ENCODE measurements at regions of chrX and their contacts with region 1.

Region 1: DNA sequence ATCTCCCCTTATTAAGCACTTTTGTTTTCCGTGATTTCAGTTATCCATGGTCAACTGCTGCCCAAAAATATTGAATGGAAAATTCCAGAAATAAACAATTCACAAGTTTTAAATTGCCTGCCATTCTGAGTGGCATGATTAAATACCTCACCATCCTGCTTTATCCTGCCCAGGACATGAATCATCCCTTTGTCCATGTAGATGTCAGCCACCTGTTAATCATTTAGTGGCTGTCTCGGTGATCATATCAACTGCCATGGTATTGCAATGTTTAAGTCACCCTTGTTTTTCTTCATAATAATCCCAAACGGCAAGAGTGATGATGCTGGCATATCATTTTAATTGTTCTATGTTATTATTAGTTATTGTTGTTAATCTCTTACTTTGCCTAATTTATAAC is 79.8 kb upstream of the LHFPL1 start:
- DNase-seq: no peak
- ATAC-seq: peak in 3 of 4 donors; percentile 67 to 83 (median 80)
- H3K4me3 ChIP-seq: no peak overlapping the region
- H3K27ac ChIP-seq: no peak overlapping the region
- H3K4me1 ChIP-seq: peaks cover 7% of the 10 kb centered on the region
- H3K27me3 ChIP-seq: no peaks in the 10 kb centered on the region
- CTCF ChIP-seq: no peak

Region 2: GRCh38 chrX:112941209-112941788 is 181.8 kb after region 1 on chrX:
- intact Hi-C with region 1: loop called in 1 of 2 experiments (anchors 5 kb)
- DNase-seq: no peak
- ATAC-seq: peak in 2 of 4 donors; percentile 56 to 57
- H3K4me3 ChIP-seq: peak overlapping the region; percentile 51
- H3K27ac ChIP-seq: no peak overlapping the region
- H3K4me1 ChIP-seq: no peaks in the 10 kb centered on the region
- H3K27me3 ChIP-seq: peaks cover 0 to 5% (median 0%) of the 10 kb centered on the region in 3 donors
- CTCF ChIP-seq: no peak

Measured in psoas muscle (tissue), 8 donors.